Endothelial cell of umbilical vein (primary cell): ENCODE measurements at regions of chr1 and their contacts with region 1.

Region 1: DNA sequence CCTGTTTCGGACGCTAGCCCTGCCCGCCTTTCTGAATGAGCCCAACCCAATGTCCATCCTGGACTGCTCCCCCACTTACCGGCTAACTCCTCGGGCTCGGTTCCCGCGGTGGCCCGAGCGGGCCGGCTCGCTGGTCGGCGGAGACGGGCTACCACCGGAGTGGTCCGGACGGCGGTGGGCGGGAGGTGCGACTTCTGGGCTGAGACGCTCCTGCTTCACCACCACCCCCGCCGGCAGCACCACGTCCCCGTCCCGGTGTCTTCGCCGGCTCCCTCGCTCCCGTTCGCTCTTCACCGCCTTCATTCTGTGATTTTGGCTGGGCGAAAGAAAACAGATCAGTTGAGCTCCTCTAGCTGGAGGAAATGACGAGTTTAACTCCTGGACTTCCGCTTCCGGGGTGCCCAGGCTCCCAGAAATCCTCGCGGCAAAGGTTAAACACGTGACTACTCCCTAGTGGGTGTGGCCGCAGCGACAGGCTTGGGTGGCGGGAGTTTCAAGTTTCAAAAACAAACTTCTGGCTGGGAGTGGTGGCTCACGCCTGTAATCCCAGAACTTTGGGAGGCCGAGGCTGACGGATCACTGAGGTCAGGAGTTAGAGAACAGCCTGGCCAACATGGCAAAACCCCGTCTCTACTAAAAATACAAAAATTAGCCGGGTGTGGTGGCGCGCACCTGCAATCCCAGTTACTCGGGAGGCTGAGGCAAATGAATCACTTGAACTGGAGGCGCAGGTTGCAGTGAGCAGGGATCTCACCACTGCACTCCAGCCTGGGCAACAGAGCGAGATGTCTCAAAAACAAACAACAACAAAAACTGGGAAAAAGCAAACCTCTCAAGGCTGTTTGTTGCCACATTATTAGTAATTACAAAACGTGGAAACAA is at the start of gene SNIP1:
- DNase-seq: peak; percentile 93
- H3K4me3 ChIP-seq: peak within 1 kb of the TSS; percentile 88 to 94 (median 88)
- H3K27ac ChIP-seq: peak within 1 kb of the TSS; percentile 76
- H3K4me1 ChIP-seq: peaks cover 14% of the 10 kb centered on the region
- H3K27me3 ChIP-seq: no peaks in the 10 kb centered on the region
- CTCF ChIP-seq: no peak
- POLR2A ChIP-seq: peak; percentile 56
- total RNA-seq, gene SNIP1: 18.4 and 19.6 TPM in 2 replicates

Region 2: GRCh38 chr1:37474046-37474759 is 80.0 kb before region 1 on chr1 and contains the start of gene ZC3H12A:
- CTCF ChIA-PET with region 1: no interaction called
- POLR2A ChIA-PET with region 1: no interaction called
- dilution Hi-C with region 1: no loop called
- intact Hi-C with region 1: loop called (anchors 2 kb)
- DNase-seq: peak; percentile 84
- H3K4me3 ChIP-seq: peak within 1 kb of the TSS; percentile 47 to 69 (median 55)
- H3K27ac ChIP-seq: peak within 1 kb of the TSS; percentile 65
- H3K4me1 ChIP-seq: peaks cover 72% of the 10 kb centered on the region
- H3K27me3 ChIP-seq: no peaks in the 10 kb centered on the region
- CTCF ChIP-seq: no peak
- POLR2A ChIP-seq: peak; percentile 97
- total RNA-seq, gene ZC3H12A: 6.3 and 7.5 TPM in 2 replicates

Region 3: GRCh38 chr1:37537378-37537777 is 16.8 kb before region 1 on chr1:
- CTCF ChIA-PET with region 1: no interaction called
- POLR2A ChIA-PET with region 1: no interaction called
- dilution Hi-C with region 1: no loop called
- intact Hi-C with region 1: loop called (anchors 1 kb)
- DNase-seq: no peak
- H3K4me3 ChIP-seq: no peak overlapping the region
- H3K27ac ChIP-seq: no peak overlapping the region
- H3K4me1 ChIP-seq: peaks cover 17% of the 10 kb centered on the region
- H3K27me3 ChIP-seq: no peaks in the 10 kb centered on the region
- CTCF ChIP-seq: no peak
- POLR2A ChIP-seq: no peak

Region 4: GRCh38 chr1:37596320-37596667 is 42.1 kb after region 1 on chr1:
- CTCF ChIA-PET with region 1: no interaction called
- POLR2A ChIA-PET with region 1: no interaction called
- dilution Hi-C with region 1: no loop called
- intact Hi-C with region 1: no loop called
- DNase-seq: no peak
- H3K4me3 ChIP-seq: peak overlapping the region; percentile 37 to 89 (median 75)
- H3K27ac ChIP-seq: peak overlapping the region; percentile 30
- H3K4me1 ChIP-seq: peaks cover 17% of the 10 kb centered on the region
- H3K27me3 ChIP-seq: peaks cover 1 to 10% of the 10 kb centered on the region in 2 experiments
- CTCF ChIP-seq: no peak
- POLR2A ChIP-seq: no peak